GM12878 (cell line): ENCODE measurements at regions of chr15 and their contacts with region 1.

Region 1: GRCh38 chr15:99704444-99704838 is 28.8 kb downstream of the LYSMD4 start:
- DNase-seq: peak; percentile 79
- ATAC-seq: peak; percentile 96
- H3K4me3 ChIP-seq: no peak overlapping the region
- H3K27ac ChIP-seq: no peak overlapping the region
- H3K4me1 ChIP-seq: peaks cover 27% of the 10 kb centered on the region
- H3K27me3 ChIP-seq: no peaks in the 10 kb centered on the region
- CTCF ChIP-seq: peak; percentile 65 to 84 (median 77)
- EP300 ChIP-seq: no peak
- POLR2A ChIP-seq: peak; percentile 36; the same call in 1 of the 2 replicates
- RAD21 ChIP-seq: peak; percentile 94

Region 2: DNA sequence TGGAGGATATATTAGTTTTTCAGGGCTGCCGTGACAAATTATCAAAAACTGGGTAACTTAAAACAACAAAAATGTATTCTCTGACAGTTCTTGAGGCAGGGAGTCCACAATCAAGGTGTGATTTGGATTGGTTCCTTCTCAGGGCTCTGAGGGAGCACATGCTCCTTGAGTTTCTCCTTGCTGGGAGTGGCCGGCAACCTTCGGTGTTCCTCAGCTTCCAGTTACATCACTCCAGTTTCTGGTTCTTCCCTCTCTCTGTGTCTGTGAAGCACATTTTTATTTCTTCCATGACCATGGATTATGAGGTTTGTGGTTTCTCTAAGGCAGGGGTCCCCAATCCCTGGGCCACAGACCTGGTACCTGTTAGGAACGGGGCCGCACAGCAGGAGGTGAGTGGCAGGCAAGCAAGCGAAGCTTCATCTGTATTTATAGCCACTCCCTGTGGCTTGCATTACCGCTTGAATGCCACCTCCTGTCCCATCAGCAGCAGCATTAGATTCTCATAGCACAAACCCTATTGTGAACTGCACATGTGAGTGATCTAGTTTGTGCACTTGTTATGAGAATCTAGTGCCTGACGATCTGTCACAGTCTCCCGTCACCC is 428.8 kb before region 1 on chr15:
- CTCF ChIA-PET with region 1: interaction called, 184 read pairs
- POLR2A ChIA-PET with region 1: no interaction called
- RAD21 ChIA-PET with region 1: interaction called, 137 read pairs
- SMC1A ChIA-PET with region 1: interaction called, 163 read pairs
- in situ Hi-C with region 1: loop called (anchors 5 kb)
- intact Hi-C with region 1: loop called (anchors 1 kb)
- DNase-seq: no peak
- ATAC-seq: peak; percentile 38
- H3K4me3 ChIP-seq: no peak overlapping the region
- H3K27ac ChIP-seq: no peak overlapping the region
- H3K4me1 ChIP-seq: no peaks in the 10 kb centered on the region
- H3K27me3 ChIP-seq: no peaks in the 10 kb centered on the region
- CTCF ChIP-seq: no peak
- EP300 ChIP-seq: no peak
- POLR2A ChIP-seq: no peak
- RAD21 ChIP-seq: no peak

Region 3: GRCh38 chr15:99343881-99344551 is 360.4 kb before region 1 on chr15:
- CTCF ChIA-PET with region 1: interaction called, 41 read pairs
- POLR2A ChIA-PET with region 1: no interaction called
- RAD21 ChIA-PET with region 1: interaction called, 26 read pairs
- SMC1A ChIA-PET with region 1: interaction called, 42 read pairs
- in situ Hi-C with region 1: no loop called
- intact Hi-C with region 1: loop called (anchors 10 kb)
- DNase-seq: no peak
- ATAC-seq: peak; percentile 80
- H3K4me3 ChIP-seq: no peak overlapping the region
- H3K27ac ChIP-seq: no peak overlapping the region
- H3K4me1 ChIP-seq: peaks cover 16% of the 10 kb centered on the region
- H3K27me3 ChIP-seq: no peaks in the 10 kb centered on the region
- CTCF ChIP-seq: peak; percentile 45 to 52 (median 47); a peak in 5 of 6 replicates
- EP300 ChIP-seq: no peak
- POLR2A ChIP-seq: no peak
- RAD21 ChIP-seq: peak; percentile 54

Region 4: DNA sequence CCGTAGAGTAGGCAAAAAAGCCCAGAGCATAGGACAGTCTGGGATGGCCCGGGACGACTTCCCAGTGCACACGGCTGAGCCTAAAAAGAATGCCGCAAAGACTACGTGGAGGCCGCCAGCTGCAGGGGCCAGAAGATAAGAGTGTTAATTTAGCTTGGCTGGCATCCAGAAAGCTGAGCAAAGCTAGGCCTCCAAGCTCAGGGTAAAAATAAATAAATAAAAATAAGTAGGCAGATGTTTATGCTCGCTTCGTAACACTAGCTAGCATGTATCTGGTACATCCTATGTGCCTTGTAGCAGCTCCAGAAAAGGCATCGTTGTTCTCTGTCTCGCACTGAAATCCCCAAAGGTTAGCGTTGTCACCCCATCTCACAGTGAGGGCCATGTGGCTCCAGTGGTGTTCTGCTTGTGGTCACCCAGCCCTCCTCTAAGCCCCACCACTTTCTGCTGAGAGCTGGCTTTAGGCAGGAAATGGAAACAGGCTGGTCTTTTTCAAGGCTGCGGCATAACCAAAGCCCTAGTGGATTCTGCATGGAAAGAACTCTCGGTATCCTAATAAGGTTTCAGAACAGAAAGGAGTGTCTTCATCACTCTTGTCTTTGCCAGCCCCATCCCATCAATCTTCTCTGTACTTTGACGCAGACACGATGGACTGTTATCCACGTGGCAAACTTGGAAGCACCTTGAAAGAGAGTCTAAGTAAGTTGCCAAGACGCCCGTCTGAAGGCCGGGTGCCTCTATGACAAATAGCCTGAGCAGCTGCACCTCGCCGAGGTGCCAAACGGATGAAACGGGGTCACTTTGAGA is 196.7 kb before region 1 on chr15:
- CTCF ChIA-PET with region 1: interaction called, 29 read pairs
- POLR2A ChIA-PET with region 1: interaction called, 7 read pairs
- RAD21 ChIA-PET with region 1: interaction called, 51 read pairs
- SMC1A ChIA-PET with region 1: interaction called, 42 read pairs
- in situ Hi-C with region 1: no loop called
- intact Hi-C with region 1: loop called (anchors 5 kb)
- DNase-seq: no peak
- ATAC-seq: peak; percentile 49
- H3K4me3 ChIP-seq: no peak overlapping the region; the same call in 1 of the 2 replicates
- H3K27ac ChIP-seq: peak overlapping the region; percentile 74
- H3K4me1 ChIP-seq: peaks cover 88% of the 10 kb centered on the region
- H3K27me3 ChIP-seq: no peaks in the 10 kb centered on the region
- CTCF ChIP-seq: no peak
- EP300 ChIP-seq: peak in 1 of 2 experiments; percentile 59; a peak in 2 of 4 replicates
- POLR2A ChIP-seq: peak; percentile 63
- RAD21 ChIP-seq: no peak

Region 5: GRCh38 chr15:99651023-99651807 is 53.2 kb before region 1 on chr15:
- CTCF ChIA-PET with region 1: no interaction called
- POLR2A ChIA-PET with region 1: no interaction called
- RAD21 ChIA-PET with region 1: interaction called, 3 read pairs
- SMC1A ChIA-PET with region 1: interaction called, 10 read pairs
- in situ Hi-C with region 1: no loop called
- intact Hi-C with region 1: no loop called
- DNase-seq: no peak
- ATAC-seq: no peak
- H3K4me3 ChIP-seq: no peak overlapping the region
- H3K27ac ChIP-seq: no peak overlapping the region
- H3K4me1 ChIP-seq: no peaks in the 10 kb centered on the region
- H3K27me3 ChIP-seq: no peaks in the 10 kb centered on the region
- CTCF ChIP-seq: no peak
- EP300 ChIP-seq: no peak
- POLR2A ChIP-seq: no peak
- RAD21 ChIP-seq: no peak

Region 6: DNA sequence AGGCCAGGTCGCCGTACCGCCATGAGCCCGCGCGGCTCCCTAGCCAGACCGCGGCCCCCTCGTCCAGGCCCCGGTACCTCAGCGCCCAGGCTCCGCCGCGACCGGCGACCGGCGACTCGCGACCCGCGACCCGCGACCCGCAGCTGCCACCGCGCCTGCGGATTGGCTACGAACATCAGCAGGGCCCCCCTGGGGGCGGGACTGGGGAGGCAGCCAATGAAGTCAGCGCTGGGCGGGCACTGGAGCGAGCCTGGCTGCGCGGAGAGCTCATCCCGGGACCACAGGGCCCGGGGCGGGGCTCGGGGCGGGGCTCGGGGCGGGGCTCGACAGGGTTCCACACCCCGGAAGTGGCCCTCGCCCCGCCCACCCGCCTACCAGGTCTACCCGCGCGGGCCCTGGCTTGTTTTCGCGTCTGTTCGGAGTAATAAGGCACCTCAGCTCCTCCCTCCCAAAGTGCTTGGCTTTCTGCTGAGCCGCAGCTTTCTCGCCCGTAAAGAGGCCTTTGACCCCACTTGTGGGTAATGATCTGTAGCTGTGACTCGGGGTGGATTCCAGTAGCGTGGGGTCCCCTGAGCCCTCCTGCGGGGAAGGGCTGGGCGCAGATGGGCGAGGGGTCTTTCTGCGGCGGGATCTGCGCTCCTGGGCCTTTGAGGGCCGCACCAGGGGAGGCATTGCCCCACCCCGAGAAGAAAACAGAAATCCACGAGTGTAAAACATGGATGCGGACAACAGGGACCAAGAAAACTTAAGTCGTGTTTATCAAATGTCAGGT is 29.0 kb after region 1 on chr15 and contains the start of gene LYSMD4:
- CTCF ChIA-PET with region 1: interaction called, 13 read pairs
- POLR2A ChIA-PET with region 1: no interaction called
- RAD21 ChIA-PET with region 1: interaction called, 25 read pairs
- SMC1A ChIA-PET with region 1: interaction called, 9 read pairs
- in situ Hi-C with region 1: no loop called
- intact Hi-C with region 1: no loop called
- DNase-seq: peak; percentile 58
- ATAC-seq: peak; percentile 100
- H3K4me3 ChIP-seq: peak within 1 kb of the TSS; percentile 84
- H3K27ac ChIP-seq: peak within 1 kb of the TSS; percentile 67
- H3K4me1 ChIP-seq: no peaks in the 10 kb centered on the region
- H3K27me3 ChIP-seq: no peaks in the 10 kb centered on the region
- CTCF ChIP-seq: no peak
- EP300 ChIP-seq: no peak
- POLR2A ChIP-seq: peak; percentile 83
- RAD21 ChIP-seq: no peak
- polyA plus RNA-seq, gene LYSMD4: 1.8 to 5.2 TPM